MCF 10A (cell line): ENCODE measurements at regions of chr17 and their contacts with region 1.

Region 1: GRCh38 chr17:64496786-64497564 is at the start of gene POLG2:
- DNase-seq: peak; percentile 94
- H3K4me3 Mint-ChIP-seq: peak within 1 kb of the TSS; percentile 100
- H3K27ac Mint-ChIP-seq: peak within 1 kb of the TSS; percentile 98
- H3K4me1 Mint-ChIP-seq: peaks cover 39% of the 10 kb centered on the region
- H3K27me3 Mint-ChIP-seq: no peaks in the 10 kb centered on the region
- CTCF ChIP-seq: peak; percentile 38
- total RNA-seq, gene POLG2: 27.5 and 29.4 TPM in 2 replicates

Region 2: GRCh38 chr17:64306850-64307463 is 190.0 kb before region 1 on chr17:
- CTCF ChIA-PET with region 1: no interaction called
- POLR2A ChIA-PET with region 1: no interaction called
- intact Hi-C with region 1: loop called (anchors 5 kb)
- DNase-seq: peak; percentile 82
- H3K4me3 Mint-ChIP-seq: no peak overlapping the region
- H3K27ac Mint-ChIP-seq: no peak overlapping the region
- H3K4me1 Mint-ChIP-seq: no peaks in the 10 kb centered on the region
- H3K27me3 Mint-ChIP-seq: no peaks in the 10 kb centered on the region
- CTCF ChIP-seq: peak; percentile 78

Region 3: GRCh38 chr17:64484380-64484779 is 12.6 kb before region 1 on chr17:
- CTCF ChIA-PET with region 1: interaction called, 7 read pairs
- POLR2A ChIA-PET with region 1: interaction called, 10 read pairs
- intact Hi-C with region 1: no loop called
- DNase-seq: no peak
- H3K4me3 Mint-ChIP-seq: no peak overlapping the region
- H3K27ac Mint-ChIP-seq: no peak overlapping the region
- H3K4me1 Mint-ChIP-seq: no peaks in the 10 kb centered on the region
- H3K27me3 Mint-ChIP-seq: no peaks in the 10 kb centered on the region
- CTCF ChIP-seq: no peak

Region 4: GRCh38 chr17:64599187-64599676 is 102.3 kb after region 1 on chr17:
- CTCF ChIA-PET with region 1: no interaction called
- POLR2A ChIA-PET with region 1: no interaction called
- intact Hi-C with region 1: no loop called
- DNase-seq: no peak
- H3K4me3 Mint-ChIP-seq: no peak overlapping the region
- H3K27ac Mint-ChIP-seq: peak overlapping the region; percentile 16
- H3K4me1 Mint-ChIP-seq: peaks cover 6% of the 10 kb centered on the region
- H3K27me3 Mint-ChIP-seq: no peaks in the 10 kb centered on the region
- CTCF ChIP-seq: no peak